ENCODE measurements at regions of chr19 and their contacts with region 1.

Region 1: GRCh38 chr19:21835810-21836444 is at the start of gene ZNF43:
- DNase-seq: peak; percentile 91 to 99 (median 97)

Region 2: GRCh38 chr19:21505459-21506451 is 330.2 kb before region 1 on chr19 and contains the start of gene ZNF429:
- intact Hi-C with region 1: loop called (anchors 5 kb)
- DNase-seq: peak; percentile 86 to 99 (median 94)

Region 3: DNA sequence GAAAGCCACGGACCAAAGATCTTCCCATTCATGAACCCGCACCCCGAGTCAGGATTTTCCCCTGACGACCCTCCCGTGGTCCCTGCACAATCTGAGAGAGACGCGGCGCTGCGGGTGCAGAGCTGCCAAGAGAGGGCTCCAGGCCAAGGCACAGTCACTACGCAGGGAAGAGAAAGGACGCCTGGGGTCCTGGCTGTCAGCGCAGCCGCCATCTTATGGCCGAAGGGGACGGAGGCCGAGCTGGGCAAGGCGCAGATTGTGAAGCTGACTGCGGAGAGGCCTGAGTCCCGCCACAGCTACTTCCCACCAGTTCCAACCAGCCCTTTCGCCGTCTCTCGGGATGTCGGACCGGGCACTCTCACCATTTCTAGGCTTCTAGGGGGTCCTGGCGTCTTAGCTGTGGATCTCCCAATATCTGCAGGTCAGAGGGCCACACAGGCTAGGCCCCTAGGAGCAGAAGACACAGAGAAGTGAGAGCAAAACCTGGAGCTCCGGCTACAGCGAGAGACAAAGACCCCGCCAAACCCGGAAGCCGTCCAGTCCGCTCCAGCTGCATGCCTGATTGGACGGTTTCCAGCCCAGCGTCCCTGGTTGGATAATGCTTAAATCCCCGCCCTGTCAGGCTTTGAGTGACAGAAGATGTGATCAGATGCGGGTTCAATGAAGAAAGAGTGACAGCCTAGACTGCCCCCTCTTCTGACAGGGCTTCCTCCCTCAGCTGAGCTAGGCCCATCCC is 68.7 kb before region 1 on chr19 and contains the start of gene ZNF100:
- intact Hi-C with region 1: loop called (anchors 5 kb)
- DNase-seq: peak; percentile 84 to 98 (median 94)

Region 4: GRCh38 chr19:21851596-21852345 is 15.8 kb after region 1 on chr19:
- intact Hi-C with region 1: loop called (anchors 1 kb)
- DNase-seq: peak; percentile 88 to 99 (median 96)

Measured in posterior cingulate gyrus (tissue), 11 donors.